IMR-90 (cell line): ENCODE measurements at regions of chr3 and their contacts with region 1.

Region 1: DNA sequence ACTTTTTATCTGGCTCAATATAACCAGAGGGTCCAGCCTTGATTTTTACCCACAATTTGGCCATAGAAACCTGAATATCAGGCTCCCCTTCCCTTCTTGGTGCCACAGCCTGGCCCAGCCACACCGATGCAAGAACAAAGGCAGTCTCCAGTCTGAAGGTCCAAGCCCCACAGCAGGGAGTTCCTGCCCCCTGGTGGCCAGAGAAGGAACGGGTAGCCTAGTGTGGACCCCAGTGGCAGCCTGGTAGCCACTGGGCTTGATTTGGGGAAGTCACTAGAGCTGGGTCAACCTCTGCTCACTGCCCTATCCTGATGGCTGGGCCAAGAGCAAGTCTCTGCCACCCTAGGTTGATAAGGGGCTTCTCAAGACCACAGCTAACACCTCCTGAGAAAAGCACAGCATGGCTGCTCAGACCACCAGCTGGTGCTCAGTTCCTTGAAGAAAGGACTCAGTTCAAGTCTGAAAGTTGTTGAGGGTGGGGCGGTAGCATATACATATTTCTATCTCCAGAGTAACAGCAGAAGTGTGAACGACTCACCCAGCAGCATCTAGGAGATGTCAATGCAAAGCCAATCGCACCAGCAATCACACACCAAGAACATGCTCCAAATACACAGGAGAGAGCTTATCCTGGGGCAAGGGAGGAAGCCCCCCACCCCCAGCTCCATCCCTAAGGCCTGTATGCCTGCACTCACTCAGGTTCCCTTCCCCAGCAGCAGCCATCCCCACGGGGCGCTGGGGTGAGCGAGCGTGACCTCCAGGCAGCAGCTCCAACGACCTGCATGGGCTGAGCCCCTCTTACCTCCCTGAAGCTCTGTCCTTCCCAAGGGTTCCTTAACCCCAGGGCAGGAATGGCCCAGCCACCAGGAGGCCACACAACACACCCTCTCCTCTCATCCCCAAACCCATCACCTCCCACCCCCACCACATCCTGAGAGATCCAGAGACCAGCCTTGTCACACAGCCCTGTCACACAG is 7.6 kb downstream of the PFKFB4 start:
- DNase-seq: peak; percentile 69
- ATAC-seq: peak; percentile 100
- H3K4me3 ChIP-seq: no peak overlapping the region
- H3K27ac ChIP-seq: no peak overlapping the region
- H3K4me1 ChIP-seq: no peaks in the 10 kb centered on the region
- H3K27me3 ChIP-seq: no peaks in the 10 kb centered on the region
- CTCF ChIP-seq: peak; percentile 95
- POLR2A ChIP-seq: no peak
- RAD21 ChIP-seq: peak; percentile 93

Region 2: DNA sequence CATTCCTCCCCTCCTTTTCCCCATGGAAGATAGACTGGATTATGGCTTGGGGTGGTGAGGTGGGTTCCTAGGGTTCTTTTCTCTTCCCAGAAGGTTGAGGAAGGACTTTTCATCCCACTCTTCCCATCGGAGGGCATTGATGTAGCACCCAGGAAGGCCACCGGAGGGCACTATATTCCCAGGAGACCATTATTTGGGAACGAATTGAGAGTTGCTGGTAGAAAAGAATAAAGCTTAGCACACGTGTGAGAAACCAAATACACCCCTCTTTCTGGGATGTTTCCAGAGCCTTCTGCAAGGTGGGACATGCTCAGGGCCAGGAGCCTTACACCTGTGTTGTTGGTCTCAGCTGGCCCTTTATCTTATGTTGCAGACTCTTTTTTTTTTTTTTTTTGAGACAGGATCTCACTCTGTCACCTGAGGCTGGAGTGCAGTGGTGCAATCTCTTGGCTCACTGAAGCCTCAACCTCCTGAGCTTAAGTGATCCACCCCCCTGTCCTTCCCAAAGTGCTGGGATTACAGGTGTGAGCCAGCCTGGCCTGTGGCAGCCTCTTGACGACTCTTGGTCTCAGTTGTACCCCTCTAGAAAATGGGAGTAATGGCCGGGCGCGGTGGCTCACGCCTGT is 354.5 kb before region 1 on chr3:
- CTCF ChIA-PET with region 1: no interaction called
- POLR2A ChIA-PET with region 1: interaction called, 3 read pairs
- dilution Hi-C with region 1: no loop called
- in situ Hi-C with region 1: no loop called
- intact Hi-C with region 1: loop called (anchors 5 kb)
- DNase-seq: peak; percentile 51
- ATAC-seq: peak; percentile 94
- H3K4me3 ChIP-seq: no peak overlapping the region
- H3K27ac ChIP-seq: no peak overlapping the region
- H3K4me1 ChIP-seq: no peaks in the 10 kb centered on the region
- H3K27me3 ChIP-seq: peaks cover 7% of the 10 kb centered on the region
- CTCF ChIP-seq: peak; percentile 82
- POLR2A ChIP-seq: no peak
- RAD21 ChIP-seq: peak; percentile 79

Region 3: DNA sequence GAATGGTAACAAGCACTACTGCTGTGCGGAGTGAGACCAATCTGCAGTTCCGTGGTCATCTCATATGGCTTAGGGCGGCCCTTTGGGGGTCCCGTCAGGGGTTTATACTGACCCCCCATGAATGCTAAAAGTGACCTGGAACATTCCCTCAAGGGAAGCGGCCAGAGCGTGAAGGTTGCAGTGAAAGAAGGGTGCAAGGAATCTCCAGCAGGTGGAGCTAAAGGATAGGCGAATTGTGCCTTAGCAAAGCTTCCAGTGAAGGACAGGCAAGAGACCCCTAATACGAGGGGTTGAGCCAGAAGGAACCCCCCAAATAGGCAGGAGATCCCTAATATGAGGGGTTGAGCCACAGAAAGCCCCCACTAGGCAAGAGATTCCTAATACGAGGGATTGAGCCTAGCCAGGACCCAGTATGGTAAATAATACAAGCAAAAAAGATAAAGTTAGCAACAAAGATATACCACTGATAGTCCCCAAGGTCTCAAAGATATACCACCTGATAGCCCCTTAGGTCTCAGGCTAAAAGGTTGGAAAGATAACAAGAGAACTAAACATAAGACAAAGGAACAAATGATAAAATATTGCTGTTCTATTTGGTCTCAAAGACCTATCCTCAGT is 275.3 kb before region 1 on chr3:
- CTCF ChIA-PET with region 1: interaction called, 4 read pairs
- POLR2A ChIA-PET with region 1: no interaction called
- dilution Hi-C with region 1: no loop called
- in situ Hi-C with region 1: loop called (anchors 10 kb)
- intact Hi-C with region 1: loop called (anchors 2 kb)
- DNase-seq: peak; percentile 62
- ATAC-seq: peak; percentile 92
- H3K4me3 ChIP-seq: no peak overlapping the region
- H3K27ac ChIP-seq: no peak overlapping the region
- H3K4me1 ChIP-seq: no peaks in the 10 kb centered on the region
- H3K27me3 ChIP-seq: no peaks in the 10 kb centered on the region
- CTCF ChIP-seq: peak; percentile 85
- POLR2A ChIP-seq: 0 out of 2 replicates have a peak, but pooled peaks have one; percentile 31
- RAD21 ChIP-seq: peak; percentile 89

Region 4: GRCh38 chr3:48465531-48466378 is 83.3 kb before region 1 on chr3:
- CTCF ChIA-PET with region 1: no interaction called
- POLR2A ChIA-PET with region 1: no interaction called
- dilution Hi-C with region 1: no loop called
- in situ Hi-C with region 1: no loop called
- intact Hi-C with region 1: loop called (anchors 1 kb)
- DNase-seq: peak; percentile 100
- ATAC-seq: peak; percentile 92
- H3K4me3 ChIP-seq: peak overlapping the region; percentile 52
- H3K27ac ChIP-seq: peak overlapping the region; percentile 92
- H3K4me1 ChIP-seq: peaks cover 19% of the 10 kb centered on the region
- H3K27me3 ChIP-seq: no peaks in the 10 kb centered on the region
- CTCF ChIP-seq: peak; percentile 85
- POLR2A ChIP-seq: peak; percentile 65
- RAD21 ChIP-seq: peak; percentile 86

Region 5: DNA sequence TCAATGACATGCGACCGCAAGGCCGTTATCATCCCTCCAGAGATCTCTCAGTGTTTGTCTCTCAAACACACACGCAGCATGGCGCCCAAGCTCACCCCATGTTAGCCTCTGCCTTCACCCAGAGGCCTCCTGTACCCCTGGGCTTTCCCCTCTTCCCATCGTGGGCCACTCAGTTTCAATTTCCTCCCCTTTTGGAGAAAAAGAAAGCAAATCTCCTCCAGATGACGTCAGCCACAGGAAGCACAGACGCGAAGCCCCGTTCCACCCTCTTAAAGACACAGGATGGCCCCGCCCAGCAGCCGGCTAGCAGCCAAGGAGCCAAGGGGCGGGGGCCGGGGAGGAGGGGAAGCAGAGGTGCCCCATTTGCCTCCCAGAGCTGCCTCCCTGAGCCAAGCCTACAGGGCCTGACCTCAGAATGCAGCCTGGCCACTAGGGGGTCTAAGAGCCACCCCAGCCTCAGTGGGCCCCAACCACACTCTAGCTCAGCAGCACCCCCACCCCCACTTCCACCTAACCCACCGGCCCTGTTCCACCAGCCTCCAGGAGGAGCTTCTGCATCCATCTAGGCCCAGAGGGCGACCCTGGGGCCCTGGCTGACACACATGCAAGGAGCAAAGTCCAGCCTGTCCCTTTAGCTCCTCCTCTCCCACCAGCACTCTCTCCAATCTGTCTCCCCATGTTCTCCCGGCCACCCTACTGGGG is 76.0 kb before region 1 on chr3:
- CTCF ChIA-PET with region 1: interaction called, 3 read pairs
- POLR2A ChIA-PET with region 1: no interaction called
- dilution Hi-C with region 1: no loop called
- in situ Hi-C with region 1: no loop called
- intact Hi-C with region 1: loop called (anchors 2 kb)
- DNase-seq: peak; percentile 91
- ATAC-seq: peak; percentile 92
- H3K4me3 ChIP-seq: peak overlapping the region; percentile 68
- H3K27ac ChIP-seq: peak overlapping the region; percentile 94
- H3K4me1 ChIP-seq: peaks cover 6% of the 10 kb centered on the region
- H3K27me3 ChIP-seq: no peaks in the 10 kb centered on the region
- CTCF ChIP-seq: peak; percentile 30; the same call in 1 of the 2 replicates
- POLR2A ChIP-seq: peak; percentile 91
- RAD21 ChIP-seq: no peak

Region 6: GRCh38 chr3:48588230-48588629 is 39.2 kb after region 1 on chr3:
- CTCF ChIA-PET with region 1: no interaction called
- POLR2A ChIA-PET with region 1: no interaction called
- dilution Hi-C with region 1: no loop called
- in situ Hi-C with region 1: no loop called
- intact Hi-C with region 1: no loop called
- DNase-seq: no peak
- ATAC-seq: no peak
- H3K4me3 ChIP-seq: no peak overlapping the region
- H3K27ac ChIP-seq: no peak overlapping the region
- H3K4me1 ChIP-seq: no peaks in the 10 kb centered on the region; the same call in 1 of the 2 replicates
- H3K27me3 ChIP-seq: no peaks in the 10 kb centered on the region
- CTCF ChIP-seq: no peak
- POLR2A ChIP-seq: no peak
- RAD21 ChIP-seq: no peak